Activated naive CD8-positive, alpha-beta T cell treated with anti-CD3 and anti-CD28 coated beads, Interleukin-2, amount 10 ng/mL, durations not matched to agents 7 days and 5 days (primary cell): ENCODE measurements at regions of chr2 and their contacts with region 1.

Region 1: DNA sequence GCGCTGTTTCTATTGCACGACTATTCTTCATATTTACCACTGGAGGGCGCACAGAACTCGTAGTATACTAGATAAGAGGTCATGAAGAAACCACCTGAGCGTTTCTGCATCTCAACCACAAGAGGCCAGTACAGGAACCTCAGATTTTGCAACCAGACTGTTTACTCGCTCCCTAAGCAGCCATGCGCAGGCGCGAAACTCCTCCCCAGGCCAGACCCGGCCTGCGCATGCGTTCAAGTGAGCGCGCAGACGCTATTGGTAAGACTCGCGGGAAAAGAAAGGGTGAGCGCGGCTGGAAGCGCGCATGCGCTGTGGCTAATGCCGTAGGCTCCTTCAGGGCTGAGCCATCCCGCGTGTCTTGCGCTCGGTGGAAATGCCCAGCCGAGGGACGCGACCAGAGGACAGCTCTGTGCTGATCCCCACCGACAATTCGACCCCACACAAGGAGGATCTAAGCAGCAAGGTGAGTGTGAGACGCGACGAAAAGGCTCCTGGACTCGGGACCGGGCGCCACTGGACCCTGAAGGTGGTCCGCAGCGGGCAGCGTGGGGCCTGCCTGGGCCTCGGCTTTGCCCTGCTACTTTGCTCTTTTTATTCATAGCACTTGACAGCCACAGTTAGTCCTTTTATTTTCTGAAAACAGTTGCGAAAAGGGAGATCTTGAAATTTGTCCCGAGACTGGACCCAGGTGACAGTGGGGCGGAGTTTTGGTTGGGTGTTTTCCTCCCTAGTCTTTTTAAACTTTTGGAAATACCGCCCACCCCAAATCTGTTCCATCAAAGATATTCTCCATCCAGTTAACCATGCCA is at the start of gene ASNSD1:
- DNase-seq: peak; percentile 99
- ATAC-seq: peak; percentile 86
- H3K4me3 Mint-ChIP-seq: no peak within 1 kb of the TSS
- H3K27ac Mint-ChIP-seq: no peak within 1 kb of the TSS
- H3K4me1 Mint-ChIP-seq: peaks cover 35% of the 10 kb centered on the region
- H3K27me3 Mint-ChIP-seq: no peaks in the 10 kb centered on the region
- total RNA-seq, gene ASNSD1: 37.0 to 39.8 TPM

Region 2: DNA sequence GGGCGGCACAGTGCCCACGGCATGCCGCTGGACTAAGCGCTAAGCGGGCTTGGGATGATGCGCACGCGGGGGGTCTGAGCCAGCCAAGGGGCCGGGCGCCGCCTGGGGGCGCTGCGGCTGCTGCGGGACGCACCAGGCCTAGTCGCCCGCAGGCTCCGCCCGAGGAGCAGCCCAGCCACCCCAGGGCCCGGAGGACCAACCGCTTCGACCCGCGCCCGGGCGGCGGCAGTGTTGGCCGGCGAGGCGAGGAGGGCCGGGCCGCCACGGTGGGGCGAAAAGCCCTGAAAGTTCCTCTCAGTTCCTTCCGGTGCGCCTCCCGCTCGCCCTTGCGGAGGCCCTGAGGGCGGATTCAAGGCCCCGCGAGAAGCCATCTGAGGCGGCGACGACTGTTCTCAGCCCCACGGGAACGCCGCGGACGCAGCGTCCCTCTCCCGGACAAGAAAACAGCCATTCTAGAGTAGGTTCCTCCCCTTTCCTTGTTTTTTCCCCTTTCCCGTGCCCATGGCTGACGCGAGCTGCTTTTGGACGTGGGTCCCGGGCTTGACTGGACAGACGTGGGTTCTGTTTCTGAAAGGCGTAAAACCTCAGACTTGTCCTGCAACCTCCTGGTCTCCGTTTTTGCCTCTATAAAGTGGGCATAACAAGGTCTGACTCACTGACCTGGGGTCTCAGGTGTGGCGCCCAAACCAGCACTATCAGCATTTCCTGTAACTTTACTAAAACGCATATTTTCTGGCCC is 13.2 kb after region 1 on chr2 and contains the start of gene ANKAR:
- POLR2A ChIA-PET with region 1: interaction called, 34 read pairs
- DNase-seq: peak; percentile 87
- ATAC-seq: peak; percentile 94
- H3K4me3 Mint-ChIP-seq: peak within 1 kb of the TSS; percentile 95
- H3K27ac Mint-ChIP-seq: peak within 1 kb of the TSS; percentile 94
- H3K4me1 Mint-ChIP-seq: peaks cover 29% of the 10 kb centered on the region
- H3K27me3 Mint-ChIP-seq: no peaks in the 10 kb centered on the region
- total RNA-seq, gene ANKAR: 8.8 to 9.2 TPM

Region 3: DNA sequence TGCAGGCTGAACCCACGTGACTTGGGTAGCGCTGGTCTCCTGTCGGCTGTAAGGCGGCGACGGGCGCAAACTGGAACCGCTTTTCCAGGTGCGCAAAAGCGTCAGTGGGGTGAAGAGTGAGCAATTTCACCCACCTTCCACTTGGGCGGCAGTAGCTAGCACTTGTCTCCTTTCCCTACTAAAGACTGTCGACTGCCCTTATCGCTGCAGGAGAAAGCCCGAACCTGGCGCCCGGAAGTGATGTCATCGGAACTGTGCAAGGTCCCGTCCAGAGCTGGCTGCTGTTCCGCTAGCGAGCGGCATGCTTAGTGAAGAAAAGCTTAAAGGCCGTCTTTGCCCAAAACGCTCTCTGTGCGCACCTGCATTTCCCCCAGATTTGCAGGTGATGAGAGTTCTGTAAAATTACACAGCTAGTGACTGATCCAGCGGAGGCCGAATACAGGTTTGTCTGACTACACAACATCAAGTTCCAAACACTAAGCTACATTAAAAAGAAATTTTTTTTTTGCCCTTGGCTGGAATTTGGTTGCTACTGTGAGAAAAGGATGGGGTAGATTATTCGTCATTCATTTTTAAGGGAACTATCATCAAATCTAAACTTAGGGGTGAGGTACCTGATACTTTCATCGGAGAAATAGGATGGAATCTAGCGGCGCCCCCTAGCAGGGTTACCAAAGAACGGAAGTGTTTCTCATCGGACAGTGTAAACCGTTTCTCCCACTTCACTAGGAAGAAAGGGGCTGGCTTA is 101.4 kb after region 1 on chr2 and contains the start of gene OSGEPL1:
- POLR2A ChIA-PET with region 1: interaction called, 16 read pairs
- DNase-seq: peak; percentile 87
- ATAC-seq: peak; percentile 96
- H3K4me3 Mint-ChIP-seq: peak within 1 kb of the TSS; percentile 88
- H3K27ac Mint-ChIP-seq: peak within 1 kb of the TSS; percentile 98
- H3K4me1 Mint-ChIP-seq: peaks cover 11% of the 10 kb centered on the region
- H3K27me3 Mint-ChIP-seq: no peaks in the 10 kb centered on the region
- total RNA-seq, gene OSGEPL1: 14.3 to 15.5 TPM